Tibial artery (tissue), 4 donors: ENCODE measurements at regions of chr12 and their contacts with region 1.

Region 1: DNA sequence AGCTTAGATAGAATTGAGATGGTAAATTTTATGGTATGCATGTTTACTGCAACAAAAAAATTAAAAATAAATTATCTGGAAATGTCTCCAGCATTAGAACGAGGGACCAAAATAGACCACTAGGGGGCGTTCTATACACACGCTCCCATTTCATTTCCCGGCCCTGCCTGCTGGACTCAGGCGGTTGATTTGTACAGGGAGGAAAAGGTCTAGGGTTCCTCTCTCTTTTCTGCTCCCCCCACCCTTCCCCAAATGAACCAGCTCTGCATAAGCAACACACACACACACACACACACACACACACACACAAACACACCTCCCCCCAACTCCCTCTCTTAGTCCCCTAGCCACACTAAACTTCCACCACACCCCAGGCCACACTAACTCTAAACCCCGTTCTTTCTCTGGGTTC is 7.8 kb upstream of the DTX1 start:
- DNase-seq: peak in 1 of 2 donors; percentile 51
- H3K4me3 ChIP-seq: no peak overlapping the region
- H3K27ac ChIP-seq: no peak overlapping the region
- H3K4me1 ChIP-seq: no peaks in the 10 kb centered on the region
- H3K27me3 ChIP-seq: peaks cover 0 to 39% of the 10 kb centered on the region in 2 donors
- CTCF ChIP-seq: peak; percentile 69 to 70

Region 2: DNA sequence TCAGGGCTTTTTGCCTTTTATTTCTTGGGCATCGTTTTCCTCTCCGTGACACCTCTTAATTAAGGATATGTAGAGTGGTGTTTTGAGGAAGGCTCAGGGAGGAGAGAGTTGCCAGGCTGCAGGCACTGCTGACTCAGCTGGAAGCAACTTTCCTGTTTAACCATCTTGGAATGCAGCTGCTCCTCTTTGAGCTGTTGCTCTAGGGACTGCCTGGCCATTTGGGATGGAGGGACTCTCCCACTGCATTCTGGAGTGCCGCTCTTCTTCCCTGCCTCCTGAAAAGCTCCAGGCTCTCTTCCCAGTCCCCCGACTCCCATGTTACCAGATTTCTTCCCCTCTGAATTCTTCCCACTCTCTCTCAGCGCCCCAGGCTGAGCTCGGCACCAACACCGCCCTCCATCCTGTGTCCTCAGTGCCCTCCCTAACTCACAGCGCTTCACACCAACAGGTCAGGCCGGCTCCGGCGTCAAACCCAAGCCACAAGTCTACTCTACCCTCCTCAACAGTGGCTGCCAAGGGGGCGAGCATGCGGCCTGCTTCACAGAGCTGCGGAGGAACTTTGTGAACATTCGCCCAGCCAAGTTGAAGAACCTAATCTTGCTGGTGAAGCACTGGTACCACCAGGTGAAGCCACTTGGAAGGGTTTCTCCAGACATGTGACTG is 104.6 kb before region 1 on chr12:
- intact Hi-C with region 1: no loop called
- DNase-seq: no peak
- H3K4me3 ChIP-seq: no peak overlapping the region
- H3K27ac ChIP-seq: no peak overlapping the region
- H3K4me1 ChIP-seq: peaks cover 0 to 9% (median 4%) of the 10 kb centered on the region in 4 donors
- H3K27me3 ChIP-seq: no peaks in the 10 kb centered on the region
- CTCF ChIP-seq: no peak

Region 3: DNA sequence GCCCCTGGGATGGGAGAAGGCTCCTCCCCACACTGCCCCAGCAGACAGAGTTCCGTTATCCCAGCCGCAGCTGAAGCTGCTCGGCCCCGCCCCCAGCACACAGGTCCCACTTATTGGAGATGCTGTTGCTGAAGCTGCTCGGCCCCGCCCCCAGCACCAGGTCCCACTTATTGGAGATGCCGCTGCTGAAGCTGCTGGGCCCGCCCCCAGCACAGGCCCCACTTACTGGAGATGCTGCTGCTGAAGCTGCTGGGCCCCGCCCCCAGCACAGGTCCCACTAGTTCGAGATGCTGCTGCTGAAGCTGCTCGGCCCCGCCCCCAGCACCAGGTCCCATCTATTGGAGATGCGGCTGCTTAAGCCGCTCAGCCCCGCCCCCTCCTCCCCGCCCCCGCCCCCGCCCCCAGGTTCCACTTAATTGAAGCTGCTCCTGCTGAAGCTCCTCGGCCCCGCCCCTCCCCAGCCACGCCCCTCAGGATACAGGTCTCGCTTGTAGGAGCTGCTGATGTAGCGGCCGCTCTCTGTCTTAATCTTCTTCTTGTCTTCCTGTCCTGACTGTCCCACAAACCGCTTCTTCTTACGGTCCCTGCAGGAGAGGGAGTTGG is 112.8 kb after region 1 on chr12:
- intact Hi-C with region 1: loop called (anchors 5 kb)
- DNase-seq: no peak
- H3K4me3 ChIP-seq: no peak overlapping the region
- H3K27ac ChIP-seq: no peak overlapping the region
- H3K4me1 ChIP-seq: no peaks in the 10 kb centered on the region
- H3K27me3 ChIP-seq: peaks cover 0 to 12% of the 10 kb centered on the region in 2 donors
- CTCF ChIP-seq: no peak

Region 4: DNA sequence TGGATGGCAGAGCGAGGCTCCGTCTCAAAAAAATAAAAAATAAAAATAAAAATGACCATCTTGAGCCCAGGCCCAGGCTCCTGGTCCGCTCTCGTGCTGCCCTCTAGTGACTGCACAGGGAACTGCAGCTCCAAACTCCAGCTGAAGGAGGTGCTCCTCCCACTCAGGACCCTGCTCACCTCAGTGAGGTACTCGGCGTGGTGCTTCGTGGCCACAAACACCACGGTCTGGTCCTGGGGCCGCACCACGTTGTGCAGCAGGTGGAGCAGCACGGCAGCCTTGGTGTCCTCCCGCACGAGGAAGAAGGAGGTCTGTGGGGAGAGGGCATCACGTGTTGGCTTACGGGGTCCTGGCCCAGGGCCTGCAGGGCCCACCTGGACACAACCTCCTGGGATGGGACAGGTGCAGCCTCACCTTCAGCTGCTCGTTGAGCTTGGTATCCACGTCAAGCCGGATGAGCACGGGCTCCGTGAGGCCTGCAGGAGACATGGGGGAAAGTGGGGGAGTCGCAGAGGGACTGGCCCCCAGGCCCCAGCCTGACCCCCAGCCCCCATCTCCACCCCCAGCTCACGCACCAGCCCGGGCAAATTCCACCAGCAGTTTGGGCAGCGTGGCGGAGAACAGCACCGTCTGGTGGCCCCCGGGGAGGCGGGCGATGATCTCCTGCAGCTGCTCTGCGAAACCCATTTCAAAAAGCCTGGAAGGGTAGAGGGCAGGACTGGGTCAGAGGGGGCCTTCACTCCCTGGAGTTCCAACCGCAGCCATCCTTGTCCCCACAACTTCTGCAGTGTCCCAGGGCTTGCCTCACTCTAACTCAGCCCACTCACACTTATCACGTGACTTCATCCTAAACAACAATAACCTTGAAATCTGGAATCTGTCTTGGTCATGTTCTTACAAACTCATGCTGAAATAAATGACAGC is 126.0 kb after region 1 on chr12:
- intact Hi-C with region 1: loop called (anchors 5 kb)
- DNase-seq: peak; percentile 71 to 77
- H3K4me3 ChIP-seq: no peak overlapping the region
- H3K27ac ChIP-seq: no peak overlapping the region
- H3K4me1 ChIP-seq: no peaks in the 10 kb centered on the region
- H3K27me3 ChIP-seq: no peaks in the 10 kb centered on the region
- CTCF ChIP-seq: peak; percentile 82 to 98

Region 5: GRCh38 chr12:113479590-113480335 is 431.0 kb after region 1 on chr12:
- intact Hi-C with region 1: no loop called
- DNase-seq: no peak
- H3K4me3 ChIP-seq: no peak overlapping the region
- H3K27ac ChIP-seq: no peak overlapping the region
- H3K4me1 ChIP-seq: peaks cover 0 to 9% (median 4%) of the 10 kb centered on the region in 4 donors
- H3K27me3 ChIP-seq: peaks cover 4 to 91% of the 10 kb centered on the region in 2 donors
- CTCF ChIP-seq: no peak